Transverse colon (tissue), 4 donors: ENCODE measurements at regions of chr3 and their contacts with region 1.

Region 1: DNA sequence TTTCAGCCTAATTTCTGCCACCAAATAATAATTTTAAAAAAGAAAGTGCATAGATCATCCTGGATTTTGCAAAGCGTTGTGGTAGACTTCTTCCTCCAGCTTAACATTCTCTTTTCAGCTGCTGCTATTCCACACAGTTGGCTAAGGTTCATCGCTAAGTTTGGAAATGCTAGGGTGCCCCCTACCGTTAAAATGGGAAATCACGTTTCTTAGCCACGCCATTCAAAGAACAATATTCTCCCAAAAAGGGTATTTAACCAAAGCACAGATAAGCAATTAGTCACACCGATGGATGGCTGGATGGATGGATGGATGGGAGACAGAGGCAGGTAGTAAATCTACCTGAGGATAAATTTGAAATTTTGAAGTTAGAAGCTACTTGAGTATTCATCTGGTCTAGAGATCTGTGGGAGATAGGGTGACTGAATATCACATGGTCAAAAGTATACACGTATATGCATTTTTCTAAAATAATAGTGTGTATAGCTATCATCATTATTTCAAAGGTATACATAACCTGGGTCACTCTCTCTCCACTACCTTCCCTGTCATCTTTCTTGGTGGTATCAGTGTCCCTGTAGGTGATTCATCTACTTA is 67.2 kb downstream of the EFHB start:
- DNase-seq: peak; percentile 23
- H3K4me3 ChIP-seq: no peak overlapping the region
- H3K27ac ChIP-seq: no peak overlapping the region
- H3K4me1 ChIP-seq: no peaks in the 10 kb centered on the region
- H3K27me3 ChIP-seq: no peaks in the 10 kb centered on the region
- CTCF ChIP-seq: peak; percentile 60 to 76 (median 67)
- EP300 ChIP-seq: no peak
- POLR2A ChIP-seq: no peak

Region 2: GRCh38 chr3:19065027-19065426 is 801.8 kb before region 1 on chr3:
- in situ Hi-C with region 1: loop called in 3 of 4 experiments (anchors 25 kb)
- intact Hi-C with region 1: no loop called
- DNase-seq: no peak
- H3K4me3 ChIP-seq: no peak overlapping the region
- H3K27ac ChIP-seq: no peak overlapping the region
- H3K4me1 ChIP-seq: no peaks in the 10 kb centered on the region
- H3K27me3 ChIP-seq: no peaks in the 10 kb centered on the region
- CTCF ChIP-seq: peak in 4 of 5 experiments; percentile 21 to 38 (median 30)
- EP300 ChIP-seq: no peak
- POLR2A ChIP-seq: no peak

Region 3: DNA sequence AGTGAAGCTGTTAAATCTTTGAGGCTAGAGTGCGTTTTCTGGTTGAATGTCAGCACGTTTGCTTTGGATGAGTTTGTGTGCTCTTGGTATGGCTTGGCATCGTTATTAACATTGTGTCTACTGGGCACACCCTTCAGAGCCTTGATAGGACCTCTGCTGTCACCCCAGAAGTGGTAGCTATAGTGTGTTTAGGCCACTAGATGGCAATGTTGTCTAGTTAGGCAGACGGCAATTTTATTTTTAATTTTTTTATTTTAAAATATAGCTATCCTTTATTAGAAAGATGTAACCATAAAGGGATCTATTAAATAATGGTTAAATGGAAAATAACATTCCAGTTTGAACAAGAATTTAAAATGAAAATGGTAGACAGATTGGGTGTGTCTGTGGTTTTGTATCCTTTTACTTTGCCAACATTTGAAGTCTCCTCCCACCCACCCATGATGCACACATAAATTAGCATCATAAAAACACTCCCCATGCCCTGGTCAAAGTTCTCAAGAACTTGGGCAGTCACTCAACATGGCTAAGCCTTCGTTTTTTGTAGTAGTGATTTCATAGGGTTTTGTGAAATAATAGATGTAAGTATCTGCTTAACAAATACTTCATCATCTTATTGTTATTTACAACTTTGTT is 517.8 kb before region 1 on chr3:
- in situ Hi-C with region 1: loop called in 3 of 4 experiments (anchors 10 to 25 kb)
- intact Hi-C with region 1: no loop called
- DNase-seq: no peak
- H3K4me3 ChIP-seq: no peak overlapping the region
- H3K27ac ChIP-seq: no peak overlapping the region
- H3K4me1 ChIP-seq: peaks cover 0 to 3% (median 0%) of the 10 kb centered on the region in 4 donors
- H3K27me3 ChIP-seq: no peaks in the 10 kb centered on the region
- CTCF ChIP-seq: peak; percentile 49 to 72 (median 63)
- EP300 ChIP-seq: no peak
- POLR2A ChIP-seq: no peak